WTC11 (cell line): ENCODE measurements at regions of chr19 and their contacts with region 1.

Region 1: GRCh38 chr19:40609561-40610395 is 8.6 kb downstream of the LTBP4 start:
- DNase-seq: peak; percentile 96
- ATAC-seq: peak; percentile 59
- H3K4me3 Mint-ChIP-seq: peak overlapping the region; percentile 73
- H3K27ac Mint-ChIP-seq: no peak overlapping the region
- H3K4me1 Mint-ChIP-seq: peaks cover 40% of the 10 kb centered on the region
- H3K27me3 Mint-ChIP-seq: peaks cover 81% of the 10 kb centered on the region
- CTCF ChIP-seq: no peak

Region 2: GRCh38 chr19:40570313-40571004 is 39.3 kb before region 1 on chr19:
- CTCF ChIA-PET with region 1: interaction called, 10 read pairs
- POLR2A ChIA-PET with region 1: interaction called, 3 read pairs
- DNase-seq: peak; percentile 100
- ATAC-seq: peak; percentile 96
- H3K4me3 Mint-ChIP-seq: peak overlapping the region; percentile 75
- H3K27ac Mint-ChIP-seq: no peak overlapping the region; the same call in 1 of the 2 replicates
- H3K4me1 Mint-ChIP-seq: peaks cover 15% of the 10 kb centered on the region
- H3K27me3 Mint-ChIP-seq: peaks cover 78% of the 10 kb centered on the region
- CTCF ChIP-seq: no peak

Region 3: DNA sequence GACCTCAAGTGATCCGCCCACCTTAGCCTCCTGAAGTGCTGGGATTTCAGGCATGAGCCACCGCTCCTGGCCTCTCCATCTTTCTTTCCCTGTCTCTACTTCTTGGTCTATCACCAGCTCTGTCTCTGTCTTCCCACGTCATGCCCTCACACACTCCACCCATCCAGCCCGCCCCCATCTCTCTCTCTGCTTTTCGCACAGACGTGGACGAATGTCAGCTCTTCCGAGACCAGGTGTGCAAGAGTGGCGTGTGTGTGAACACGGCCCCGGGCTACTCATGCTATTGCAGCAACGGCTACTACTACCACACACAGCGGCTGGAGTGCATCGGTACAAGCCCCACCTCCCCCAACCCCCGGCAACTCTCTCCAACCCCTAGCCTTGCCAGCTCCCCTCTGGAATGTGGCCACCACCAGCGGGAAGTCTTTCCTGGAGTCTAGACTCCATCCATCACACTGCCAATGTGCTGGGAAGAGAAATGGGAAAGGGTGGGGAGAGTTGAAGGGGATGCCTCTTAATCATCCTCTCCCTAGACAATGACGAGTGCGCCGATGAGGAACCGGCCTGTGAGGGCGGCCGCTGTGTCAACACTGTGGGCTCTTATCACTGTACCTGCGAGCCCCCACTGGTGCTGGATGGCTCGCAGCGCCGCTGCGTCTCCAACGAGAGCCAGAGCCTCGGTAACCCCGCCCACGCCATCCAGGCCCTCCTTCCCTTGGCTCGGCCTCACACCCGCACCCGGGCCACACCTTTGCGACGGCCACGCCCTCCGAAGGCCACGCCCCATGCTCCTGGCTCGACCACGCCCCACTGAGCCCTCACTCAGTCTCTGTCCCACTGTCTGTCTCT is 13.8 kb after region 1 on chr19:
- CTCF ChIA-PET with region 1: interaction called, 10 read pairs
- POLR2A ChIA-PET with region 1: interaction called, 8 read pairs
- DNase-seq: peak; percentile 98
- ATAC-seq: peak; percentile 92
- H3K4me3 Mint-ChIP-seq: peak overlapping the region; percentile 55
- H3K27ac Mint-ChIP-seq: peak overlapping the region; percentile 93
- H3K4me1 Mint-ChIP-seq: peaks cover 19% of the 10 kb centered on the region
- H3K27me3 Mint-ChIP-seq: no peaks in the 10 kb centered on the region; the same call in 1 of the 2 replicates
- CTCF ChIP-seq: no peak